ENCODE measurements at regions of chrX and their contacts with region 1.

Region 1: GRCh38 chrX:53714580-53715345 is 28.2 kb upstream of the HUWE1 start:
- DNase-seq: peak in 13 of 14 experiments; percentile 7 to 88 (median 34)
- ATAC-seq: peak; percentile 70
- H3K4me3 ChIP-seq: peak overlapping the region; percentile 43
- H3K4me3 Mint-ChIP-seq: peak overlapping the region; percentile 76
- H3K27ac ChIP-seq: peak overlapping the region; percentile 80 to 92
- H3K27ac Mint-ChIP-seq: peak overlapping the region; percentile 90
- H3K4me1 ChIP-seq: peaks cover 56% of the 10 kb centered on the region
- H3K4me1 Mint-ChIP-seq: peaks cover 50% of the 10 kb centered on the region
- H3K27me3 ChIP-seq: no peaks in the 10 kb centered on the region
- H3K27me3 Mint-ChIP-seq: no peaks in the 10 kb centered on the region
- CTCF ChIP-seq: no peak

Region 2: GRCh38 chrX:53616946-53617345 is 97.8 kb before region 1 on chrX:
- CTCF ChIA-PET with region 1: no interaction called
- POLR2A ChIA-PET with region 1: no interaction called
- intact Hi-C with region 1: no loop called
- DNase-seq: no peak
- ATAC-seq: no peak
- H3K4me3 ChIP-seq: no peak overlapping the region
- H3K4me3 Mint-ChIP-seq: no peak overlapping the region
- H3K27ac ChIP-seq: no peak overlapping the region
- H3K27ac Mint-ChIP-seq: no peak overlapping the region
- H3K4me1 ChIP-seq: no peaks in the 10 kb centered on the region
- H3K4me1 Mint-ChIP-seq: peaks cover 5% of the 10 kb centered on the region
- H3K27me3 ChIP-seq: no peaks in the 10 kb centered on the region
- H3K27me3 Mint-ChIP-seq: no peaks in the 10 kb centered on the region
- CTCF ChIP-seq: no peak

Region 3: DNA sequence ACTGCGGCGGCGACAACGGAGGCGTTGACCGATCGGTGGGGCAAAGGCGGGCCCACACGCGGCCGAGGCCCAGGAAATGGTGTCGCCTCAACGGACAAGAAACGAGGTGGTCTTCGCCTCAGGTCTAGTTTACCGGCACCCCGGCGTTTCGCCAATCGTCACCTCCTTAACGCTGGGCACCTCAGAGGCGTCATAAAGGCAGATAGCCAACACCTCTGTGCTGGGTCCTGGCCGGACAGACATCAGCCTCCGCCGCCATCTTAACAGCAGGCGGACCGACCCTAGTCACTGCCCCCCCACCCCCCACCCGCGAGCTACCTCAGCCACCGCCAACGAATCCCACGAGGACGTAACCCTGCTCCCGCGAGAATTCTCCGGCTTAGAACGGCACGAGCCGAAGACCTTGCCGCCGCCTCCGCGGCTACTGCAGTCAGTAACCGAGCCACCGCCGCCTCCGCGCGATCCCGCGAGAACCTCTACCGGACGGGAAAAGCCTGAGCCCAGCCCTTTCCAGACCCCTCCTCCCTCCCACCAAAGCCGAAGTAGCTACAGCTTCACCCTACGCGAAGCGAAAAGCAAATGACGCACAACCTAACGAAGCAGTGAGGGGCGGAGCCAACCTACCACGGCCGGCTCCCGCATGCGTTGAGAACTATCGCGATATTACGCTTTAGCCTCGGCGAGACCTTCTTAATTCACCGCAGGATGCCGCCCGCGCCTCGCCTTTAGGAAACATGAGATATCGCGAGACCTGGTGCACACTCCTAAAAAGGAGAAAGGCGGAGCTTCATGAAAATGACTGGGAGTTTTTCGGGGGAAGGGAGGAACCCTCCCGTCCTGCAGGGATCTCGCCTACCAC is 31.0 kb before region 1 on chrX:
- CTCF ChIA-PET with region 1: interaction called, 7 read pairs
- POLR2A ChIA-PET with region 1: interaction called, 51 read pairs
- intact Hi-C with region 1: loop called (anchors 2 kb)
- DNase-seq: peak; percentile 77 to 98 (median 86)
- ATAC-seq: peak; percentile 78
- H3K4me3 ChIP-seq: peak overlapping the region; percentile 90
- H3K4me3 Mint-ChIP-seq: peak overlapping the region; percentile 95
- H3K27ac ChIP-seq: peak overlapping the region; percentile 75 to 98
- H3K27ac Mint-ChIP-seq: peak overlapping the region; percentile 99
- H3K4me1 ChIP-seq: peaks cover 18% of the 10 kb centered on the region
- H3K4me1 Mint-ChIP-seq: peaks cover 63% of the 10 kb centered on the region
- H3K27me3 ChIP-seq: no peaks in the 10 kb centered on the region
- H3K27me3 Mint-ChIP-seq: no peaks in the 10 kb centered on the region
- CTCF ChIP-seq: no peak

Region 4: DNA sequence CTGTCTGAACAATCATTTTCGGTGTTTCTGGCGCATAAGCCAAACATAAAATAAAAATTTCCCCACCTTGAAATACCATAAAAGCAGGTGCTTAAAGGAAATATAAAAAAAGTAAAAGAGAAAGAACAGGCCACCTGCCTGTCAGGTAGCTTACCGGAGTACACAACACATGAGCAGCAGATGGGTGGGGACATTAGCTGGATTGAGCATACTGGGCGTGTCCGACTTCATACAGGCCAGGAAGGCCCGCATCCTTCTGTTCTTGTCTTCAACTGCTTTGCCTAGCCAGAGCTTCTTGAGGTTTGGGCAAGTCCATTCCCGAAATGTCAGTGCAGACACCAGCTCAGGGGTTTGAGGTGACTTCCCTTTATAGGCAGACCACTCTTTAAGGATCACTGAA is 401.6 kb after region 1 on chrX:
- CTCF ChIA-PET with region 1: no interaction called
- POLR2A ChIA-PET with region 1: no interaction called
- intact Hi-C with region 1: no loop called
- DNase-seq: no peak
- ATAC-seq: no peak
- H3K4me3 ChIP-seq: no peak overlapping the region
- H3K4me3 Mint-ChIP-seq: no peak overlapping the region
- H3K27ac ChIP-seq: no peak overlapping the region
- H3K27ac Mint-ChIP-seq: no peak overlapping the region
- H3K4me1 ChIP-seq: no peaks in the 10 kb centered on the region
- H3K4me1 Mint-ChIP-seq: no peaks in the 10 kb centered on the region
- H3K27me3 ChIP-seq: no peaks in the 10 kb centered on the region
- H3K27me3 Mint-ChIP-seq: no peaks in the 10 kb centered on the region
- CTCF ChIP-seq: no peak

Measured in CD4-positive, alpha-beta T cell (primary cell).